Activated T-helper 1 cell treated with anti-CD3 and anti-CD28 coated beads, Interleukin-12 subunit alpha, Interleukin-12 subunit beta, Interleukin-2, Interleukin-4 antibody, amounts not matched to agents 30 ng/mL and 10 ng/mL and 1 ng/mL, durations not matched to agents 14 hours and 24 hours and 36 hours (primary cell): ENCODE measurements at regions of chr4 and their contacts with region 1.

Region 1: DNA sequence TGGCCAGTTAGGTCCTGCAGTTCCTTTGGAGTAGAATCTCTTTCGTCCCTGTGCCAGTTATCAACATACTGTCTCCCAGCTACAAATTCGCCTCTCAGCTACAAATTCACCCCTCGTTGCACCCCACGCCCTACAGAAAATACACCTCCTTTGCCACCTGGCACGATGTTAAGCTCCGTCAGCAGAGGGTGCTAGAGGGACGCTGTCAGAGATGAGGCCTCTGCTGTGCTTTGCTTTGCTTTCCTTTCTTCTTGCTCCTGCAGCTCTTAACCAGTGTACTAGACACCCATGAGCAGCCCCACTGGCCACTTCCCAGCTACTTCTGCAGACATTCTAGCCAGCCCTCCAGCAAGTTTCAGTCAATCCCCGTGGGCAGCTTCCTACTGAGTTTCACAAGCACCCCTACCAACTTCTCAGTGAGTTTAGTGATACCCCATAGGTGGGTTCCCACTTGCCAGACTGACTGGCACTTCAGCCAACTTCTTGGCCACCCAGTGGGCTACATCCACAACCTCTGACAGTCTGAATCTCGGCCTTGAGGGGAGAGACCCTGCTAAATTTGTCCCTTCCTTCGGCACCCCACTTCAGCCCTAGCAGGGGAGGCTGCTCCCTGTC is 21.8 kb downstream of the HAUS3 start:
- DNase-seq: peak; percentile 66
- H3K4me3 Mint-ChIP-seq: no peak overlapping the region
- H3K27ac Mint-ChIP-seq: no peak overlapping the region
- H3K4me1 Mint-ChIP-seq: peaks cover 12% of the 10 kb centered on the region
- H3K27me3 Mint-ChIP-seq: no peaks in the 10 kb centered on the region

Region 2: GRCh38 chr4:2354118-2354517 is 134.0 kb after region 1 on chr4:
- intact Hi-C with region 1: loop called (anchors 1 kb)
- DNase-seq: no peak
- H3K4me3 Mint-ChIP-seq: no peak overlapping the region
- H3K27ac Mint-ChIP-seq: no peak overlapping the region
- H3K4me1 Mint-ChIP-seq: no peaks in the 10 kb centered on the region
- H3K27me3 Mint-ChIP-seq: no peaks in the 10 kb centered on the region

Region 3: DNA sequence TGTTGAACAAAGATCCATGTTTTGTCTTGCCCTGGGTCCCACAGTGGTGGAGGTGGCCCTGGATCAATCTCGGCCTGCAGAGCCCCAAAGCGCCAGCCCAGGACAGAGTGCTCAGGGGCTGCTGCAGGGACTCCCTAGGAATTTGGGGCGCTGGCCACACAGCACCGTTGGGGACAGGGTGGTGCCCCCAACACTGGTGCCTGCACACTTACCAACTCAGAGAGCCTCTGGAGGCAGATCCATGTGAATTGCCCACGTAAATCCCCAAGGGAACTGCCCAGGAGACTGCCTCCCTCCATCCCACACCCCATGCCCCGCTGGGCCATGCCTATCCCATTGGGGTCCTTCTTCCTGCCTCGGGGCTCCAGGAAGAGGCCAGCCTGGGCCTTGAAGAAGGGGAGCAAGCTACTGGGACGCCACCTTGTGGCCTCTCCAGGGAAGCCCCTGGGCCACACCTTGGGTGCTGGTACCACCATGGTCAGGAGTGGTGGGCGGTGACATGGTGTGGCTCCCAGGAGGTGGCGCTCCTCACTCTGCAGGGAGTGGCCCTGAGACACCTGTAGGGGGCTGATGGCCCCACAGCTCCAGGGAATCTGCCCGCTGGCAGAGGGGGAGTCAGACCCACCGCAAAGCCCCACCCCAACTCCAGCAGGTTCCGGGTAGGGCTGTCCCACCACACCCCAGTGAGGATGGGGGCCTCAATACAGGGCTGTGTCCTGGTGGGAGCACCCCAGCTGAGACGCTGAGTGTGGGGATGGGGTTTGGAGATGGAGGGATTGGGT is 221.5 kb after region 1 on chr4:
- intact Hi-C with region 1: loop called (anchors 1 kb)
- DNase-seq: peak; percentile 55
- H3K4me3 Mint-ChIP-seq: no peak overlapping the region
- H3K27ac Mint-ChIP-seq: no peak overlapping the region
- H3K4me1 Mint-ChIP-seq: no peaks in the 10 kb centered on the region
- H3K27me3 Mint-ChIP-seq: peaks cover 2% of the 10 kb centered on the region

Region 4: GRCh38 chr4:2462218-2462991 is 242.3 kb after region 1 on chr4:
- intact Hi-C with region 1: loop called (anchors 1 kb)
- DNase-seq: peak; percentile 57
- H3K4me3 Mint-ChIP-seq: peak overlapping the region; percentile 71
- H3K27ac Mint-ChIP-seq: no peak overlapping the region
- H3K4me1 Mint-ChIP-seq: peaks cover 4% of the 10 kb centered on the region
- H3K27me3 Mint-ChIP-seq: peaks cover 22% of the 10 kb centered on the region

Region 5: GRCh38 chr4:2484993-2485392 is 264.9 kb after region 1 on chr4:
- intact Hi-C with region 1: loop called (anchors 1 kb)
- DNase-seq: peak; percentile 59
- H3K4me3 Mint-ChIP-seq: peak overlapping the region; percentile 41
- H3K27ac Mint-ChIP-seq: peak overlapping the region; percentile 78
- H3K4me1 Mint-ChIP-seq: peaks cover 76% of the 10 kb centered on the region
- H3K27me3 Mint-ChIP-seq: no peaks in the 10 kb centered on the region